Activated CD8-positive, alpha-beta memory T cell treated with anti-CD3 and anti-CD28 coated beads, Interleukin-2, amount 10 ng/mL, durations not matched to agents 7 days and 5 days (primary cell): ENCODE measurements at regions of chr3 and their contacts with region 1.

Region 1: DNA sequence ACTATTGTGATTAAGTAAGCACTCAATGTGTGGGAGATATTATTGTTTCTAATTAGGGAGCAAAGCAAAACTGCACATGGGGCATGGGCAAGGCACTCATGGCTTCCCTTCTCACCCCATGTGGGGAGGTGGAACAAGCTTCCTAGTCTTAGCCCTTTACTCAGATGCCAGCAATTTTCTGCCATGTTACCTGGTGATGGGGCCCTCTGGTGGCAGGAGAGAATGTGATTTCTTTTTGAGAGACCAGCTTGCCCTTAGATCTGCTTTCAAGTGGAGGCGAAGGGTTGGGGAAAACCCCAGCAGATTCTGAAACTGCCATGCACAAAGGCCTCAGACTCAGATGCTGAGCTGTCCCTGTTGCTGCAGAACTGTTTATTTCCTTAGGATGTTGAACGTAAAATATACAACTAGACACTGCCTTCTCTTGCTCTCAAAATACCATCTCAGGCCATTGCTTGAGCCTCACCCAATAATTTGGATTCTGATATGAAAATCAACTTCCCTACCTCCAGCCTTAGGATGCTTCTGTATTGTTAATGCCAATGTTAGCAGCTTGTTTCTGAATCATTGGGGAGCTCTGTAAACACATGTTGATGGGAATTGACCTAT is 130.2 kb upstream of the TPRG1 start:
- DNase-seq: peak; percentile 86
- ATAC-seq: peak; percentile 94
- H3K4me3 Mint-ChIP-seq: no peak overlapping the region
- H3K27ac Mint-ChIP-seq: peak overlapping the region; percentile 73
- H3K4me1 Mint-ChIP-seq: peaks cover 58% of the 10 kb centered on the region
- H3K27me3 Mint-ChIP-seq: no peaks in the 10 kb centered on the region

Region 2: DNA sequence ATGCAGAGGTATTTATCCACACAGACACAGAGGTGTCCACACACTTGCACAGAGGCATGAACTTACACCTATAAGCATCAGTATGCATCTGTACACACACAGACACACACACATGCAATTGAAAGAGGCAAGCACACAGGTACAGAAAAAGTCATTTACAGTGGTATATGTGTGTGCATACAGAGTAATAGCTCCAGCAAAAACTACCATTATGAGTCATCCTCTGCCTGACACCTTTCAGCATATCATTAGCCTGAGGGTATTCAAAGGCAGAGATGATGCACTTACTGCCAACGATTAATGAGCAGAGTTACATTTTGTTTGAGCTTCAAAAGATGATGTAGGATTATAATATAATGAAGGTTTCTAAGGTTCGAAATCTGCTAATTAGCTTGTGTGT is 29.9 kb after region 1 on chr3:
- CTCF ChIA-PET with region 1: interaction called, 12 read pairs
- DNase-seq: peak; percentile 44
- ATAC-seq: peak; percentile 100
- H3K4me3 Mint-ChIP-seq: no peak overlapping the region
- H3K27ac Mint-ChIP-seq: no peak overlapping the region
- H3K4me1 Mint-ChIP-seq: peaks cover 11% of the 10 kb centered on the region
- H3K27me3 Mint-ChIP-seq: no peaks in the 10 kb centered on the region

Region 3: GRCh38 chr3:189123595-189124387 is 82.2 kb after region 1 on chr3:
- CTCF ChIA-PET with region 1: interaction called, 14 read pairs
- DNase-seq: no peak
- ATAC-seq: peak; percentile 48
- H3K4me3 Mint-ChIP-seq: peak overlapping the region; percentile 77
- H3K27ac Mint-ChIP-seq: peak overlapping the region; percentile 95
- H3K4me1 Mint-ChIP-seq: peaks cover 46% of the 10 kb centered on the region
- H3K27me3 Mint-ChIP-seq: no peaks in the 10 kb centered on the region

Region 4: GRCh38 chr3:189148081-189148507 is 106.5 kb after region 1 on chr3:
- CTCF ChIA-PET with region 1: interaction called, 28 read pairs
- DNase-seq: peak; percentile 78
- ATAC-seq: peak; percentile 73
- H3K4me3 Mint-ChIP-seq: no peak overlapping the region
- H3K27ac Mint-ChIP-seq: no peak overlapping the region
- H3K4me1 Mint-ChIP-seq: peaks cover 32% of the 10 kb centered on the region
- H3K27me3 Mint-ChIP-seq: no peaks in the 10 kb centered on the region